GM18951 (cell line): ENCODE measurements at regions of chr6 and their contacts with region 1.

Region 1: DNA sequence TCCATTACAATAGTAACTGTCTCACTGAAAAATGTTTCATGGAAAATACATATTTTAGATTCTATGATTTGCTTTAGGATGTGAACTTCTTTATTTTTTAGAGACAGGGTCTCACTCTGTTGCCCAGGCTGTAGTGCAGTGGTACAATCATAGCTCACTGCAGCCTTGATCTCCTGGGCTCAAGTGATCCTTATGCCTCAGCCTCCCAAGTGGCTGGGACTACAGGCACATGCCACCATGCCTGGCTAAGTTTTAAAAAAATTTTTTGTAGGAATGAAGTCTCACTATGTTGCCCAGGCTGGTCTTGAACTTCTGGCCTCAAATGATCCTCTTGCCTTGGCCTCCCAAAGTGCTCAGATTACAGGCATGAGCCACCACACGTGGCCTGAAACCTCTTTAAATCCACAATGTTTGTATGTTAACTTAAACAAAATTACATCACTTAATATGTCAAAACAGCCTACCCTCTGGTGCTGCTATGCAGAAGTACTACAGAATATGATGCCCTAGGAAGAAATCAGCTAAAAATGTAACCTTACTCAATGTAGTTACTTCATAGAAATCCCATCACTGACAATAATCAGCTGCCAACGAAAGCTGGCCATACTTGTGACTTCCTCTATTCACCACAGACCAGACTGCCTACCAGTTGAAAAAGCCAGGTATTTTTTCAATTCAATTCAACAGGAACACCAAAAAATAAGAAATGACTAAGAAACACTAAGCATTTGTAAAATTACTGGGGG is 17.6 kb downstream of the EEF1A1 start:
- POLR2A ChIP-seq: no peak

Region 2: GRCh38 chr6:73339347-73339746 is 163.9 kb before region 1 on chr6:
- in situ Hi-C with region 1: no loop called
- POLR2A ChIP-seq: no peak

Region 3: GRCh38 chr6:73451223-73452107 is 51.7 kb before region 1 on chr6:
- in situ Hi-C with region 1: no loop called
- POLR2A ChIP-seq: peak; percentile 54

Region 4: GRCh38 chr6:73604020-73604419 is 100.8 kb after region 1 on chr6:
- in situ Hi-C with region 1: loop called (anchors 10 kb)
- POLR2A ChIP-seq: no peak